Aorta (tissue), 5 donors: ENCODE measurements at regions of chr19 and their contacts with region 1.

Region 1: GRCh38 chr19:38335949-38336637 is 463 bp downstream of the CATSPERG start:
- DNase-seq: peak; percentile 98 to 99
- ATAC-seq: peak; percentile 96
- H3K4me3 ChIP-seq: peak overlapping the region; percentile 23 to 59
- H3K27ac ChIP-seq: peak overlapping the region in 1 of 2 donors; percentile 93
- H3K4me1 ChIP-seq: no peaks in the 10 kb centered on the region
- H3K27me3 ChIP-seq: no peaks in the 10 kb centered on the region

Region 2: DNA sequence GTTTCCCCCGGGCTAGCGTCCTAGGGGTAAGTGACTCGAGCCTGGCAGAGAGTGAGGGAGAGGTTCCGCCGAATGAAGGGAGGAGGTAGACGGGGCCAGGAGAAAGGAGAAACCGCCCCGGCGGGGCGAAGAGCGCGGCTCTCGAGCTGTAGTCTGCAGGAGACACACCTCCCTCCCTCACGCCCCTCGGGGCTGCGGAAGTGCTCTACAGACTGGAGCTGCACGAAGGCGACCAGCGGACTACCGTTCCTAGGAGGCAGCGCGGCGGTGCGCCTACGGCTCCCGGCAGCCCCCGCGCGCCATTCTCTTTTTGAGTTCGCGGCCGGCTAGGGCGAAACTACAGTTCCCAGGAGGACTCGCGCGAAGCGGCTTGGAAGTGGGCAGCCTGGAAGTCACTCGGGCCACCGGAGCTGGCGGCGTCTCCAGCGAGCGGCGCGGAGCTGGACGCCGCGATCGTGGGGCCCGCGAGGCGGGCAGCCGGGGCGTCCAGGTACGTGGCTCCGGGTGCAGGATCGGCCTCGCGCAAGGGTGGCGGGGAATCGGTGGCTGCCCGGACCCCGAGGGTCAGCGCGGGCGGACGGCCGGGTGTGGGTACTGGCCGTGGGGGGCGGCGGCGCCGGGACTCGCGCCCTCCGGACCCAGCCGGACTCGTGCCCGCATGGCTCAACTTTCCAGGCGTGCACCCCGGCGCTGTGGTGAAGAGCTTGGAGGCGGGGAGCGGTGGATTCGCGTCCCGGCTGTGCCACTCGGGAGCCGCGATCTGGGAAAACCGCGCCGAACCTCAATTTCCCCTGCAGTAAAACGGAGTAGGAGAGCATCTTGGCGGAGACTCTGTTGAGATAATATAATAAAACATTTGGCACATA is 429.0 kb before region 1 on chr19 and contains the start of gene SIPA1L3:
- intact Hi-C with region 1: loop called in 1 of 2 experiments (anchors 10 kb)
- DNase-seq: peak; percentile 97 to 98
- ATAC-seq: peak; percentile 98
- H3K4me3 ChIP-seq: peak within 1 kb of the TSS; percentile 61 to 93
- H3K27ac ChIP-seq: no peak within 1 kb of the TSS
- H3K4me1 ChIP-seq: peaks cover 0 to 3% of the 10 kb centered on the region in 2 donors
- H3K27me3 ChIP-seq: no peaks in the 10 kb centered on the region
- total RNA-seq, gene SIPA1L3: 17.2 to 20.9 TPM

Region 3: DNA sequence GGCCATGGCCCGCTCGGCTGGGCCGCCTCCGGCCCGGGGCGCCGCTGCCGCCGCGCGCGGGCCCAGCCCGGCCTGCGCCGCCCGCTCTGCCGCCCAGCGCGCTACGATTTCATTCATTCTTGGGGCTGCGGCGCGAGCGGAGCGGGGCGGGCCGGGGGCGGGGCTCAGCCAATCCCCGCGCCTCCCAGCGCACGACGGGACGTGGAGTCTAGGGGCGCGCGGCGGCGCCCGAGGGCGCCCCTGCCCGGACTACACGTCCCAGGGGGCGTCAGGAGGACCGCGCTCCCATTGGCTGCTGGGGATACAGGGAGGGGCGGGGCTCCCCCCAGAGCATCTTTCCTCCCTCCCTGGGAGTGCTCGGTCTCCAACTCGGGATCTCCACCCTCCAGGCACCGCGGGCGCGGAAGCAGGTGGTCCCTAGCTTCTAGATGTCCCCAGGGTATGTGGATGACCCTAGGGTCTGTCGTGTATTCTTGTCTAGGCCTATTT is 106.5 kb before region 1 on chr19:
- intact Hi-C with region 1: loop called (anchors 1 to 2 kb)
- DNase-seq: peak; percentile 70 to 87
- ATAC-seq: peak; percentile 55
- H3K4me3 ChIP-seq: no peak overlapping the region
- H3K27ac ChIP-seq: no peak overlapping the region
- H3K4me1 ChIP-seq: no peaks in the 10 kb centered on the region
- H3K27me3 ChIP-seq: no peaks in the 10 kb centered on the region

Region 4: DNA sequence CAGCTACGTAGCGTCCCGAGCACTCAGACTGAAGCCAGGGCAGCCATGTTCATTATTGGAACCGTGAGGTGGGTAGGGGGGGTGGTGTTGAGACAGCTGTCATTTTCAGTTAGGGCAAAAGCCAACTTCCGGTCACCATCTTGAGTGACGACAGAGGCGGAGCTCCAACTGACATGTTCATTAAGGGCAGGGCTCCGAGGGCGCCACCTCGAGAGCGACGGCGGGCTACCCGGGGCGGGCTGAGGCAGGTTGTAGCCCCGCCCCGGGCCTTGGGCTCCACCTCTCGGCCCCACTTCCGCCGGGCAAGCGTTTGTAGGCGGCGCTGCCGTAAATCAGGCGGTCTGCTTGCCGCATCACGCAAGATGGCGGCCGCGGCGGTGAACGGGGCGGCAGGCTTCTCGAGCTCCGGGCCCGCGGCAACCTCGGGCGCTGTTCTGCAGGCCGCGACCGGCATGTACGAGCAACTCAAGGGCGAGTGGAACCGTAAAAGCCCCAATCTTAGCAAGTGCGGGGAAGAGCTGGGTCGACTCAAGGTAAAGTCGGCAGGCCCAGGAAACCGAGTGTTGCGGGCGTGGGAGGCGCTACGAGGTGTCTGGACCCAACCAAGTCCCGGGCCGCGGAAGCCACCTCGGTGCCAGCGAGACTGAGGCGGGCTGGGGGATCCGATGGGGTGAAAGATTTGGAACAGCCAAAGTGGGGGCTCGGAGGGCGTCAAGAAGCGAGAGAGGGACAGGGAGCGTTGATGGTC is 38.5 kb after region 1 on chr19 and contains the start of gene PSMD8:
- intact Hi-C with region 1: loop called (anchors 1 to 5 kb)
- DNase-seq: peak; percentile 99
- ATAC-seq: peak; percentile 99
- H3K4me3 ChIP-seq: peak within 1 kb of the TSS; percentile 47 to 68
- H3K27ac ChIP-seq: peak within 1 kb of the TSS in 1 of 2 donors; percentile 78
- H3K4me1 ChIP-seq: peaks cover 0 to 8% of the 10 kb centered on the region in 2 donors
- H3K27me3 ChIP-seq: no peaks in the 10 kb centered on the region
- total RNA-seq, gene PSMD8: 92.4 to 119 TPM

Region 5: DNA sequence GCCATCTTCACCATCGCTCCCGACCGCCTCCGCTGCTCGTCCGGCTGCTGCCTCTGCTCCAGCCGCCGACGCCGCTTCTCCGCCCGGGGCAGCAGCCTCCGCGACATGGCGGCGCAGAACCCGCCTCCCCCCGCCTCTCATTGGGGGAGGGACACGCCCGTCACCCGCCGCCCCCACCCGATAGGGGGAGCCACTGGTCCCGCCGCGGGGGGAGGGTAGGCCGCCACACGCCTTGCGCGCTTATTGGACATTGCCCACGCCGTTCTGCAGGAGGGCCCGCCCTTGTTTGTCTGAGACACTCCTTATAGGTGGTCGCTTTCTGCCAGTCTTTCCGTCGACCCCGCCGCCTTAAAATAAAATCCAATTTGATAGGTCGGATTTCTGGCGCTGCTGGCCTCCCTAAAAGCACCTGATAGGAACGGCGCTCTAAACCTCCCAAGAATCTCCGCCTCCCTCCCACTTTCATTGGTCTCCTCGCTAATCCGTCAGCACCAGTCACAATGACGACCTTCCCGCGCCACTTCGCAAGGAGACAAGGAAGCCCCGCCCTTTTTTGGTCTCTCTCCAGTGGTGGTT is 513.9 kb after region 1 on chr19 and contains the start of gene HNRNPL:
- intact Hi-C with region 1: loop called in 1 of 2 experiments (anchors 5 kb)
- DNase-seq: peak; percentile 99
- ATAC-seq: peak; percentile 91
- H3K4me3 ChIP-seq: peak within 1 kb of the TSS; percentile 78 to 97
- H3K27ac ChIP-seq: peak within 1 kb of the TSS; percentile 92 to 99
- H3K4me1 ChIP-seq: no peaks in the 10 kb centered on the region
- H3K27me3 ChIP-seq: no peaks in the 10 kb centered on the region
- total RNA-seq, gene HNRNPL: 220 TPM